ENCODE measurements at regions of chrX and their contacts with region 1.

Region 1: DNA sequence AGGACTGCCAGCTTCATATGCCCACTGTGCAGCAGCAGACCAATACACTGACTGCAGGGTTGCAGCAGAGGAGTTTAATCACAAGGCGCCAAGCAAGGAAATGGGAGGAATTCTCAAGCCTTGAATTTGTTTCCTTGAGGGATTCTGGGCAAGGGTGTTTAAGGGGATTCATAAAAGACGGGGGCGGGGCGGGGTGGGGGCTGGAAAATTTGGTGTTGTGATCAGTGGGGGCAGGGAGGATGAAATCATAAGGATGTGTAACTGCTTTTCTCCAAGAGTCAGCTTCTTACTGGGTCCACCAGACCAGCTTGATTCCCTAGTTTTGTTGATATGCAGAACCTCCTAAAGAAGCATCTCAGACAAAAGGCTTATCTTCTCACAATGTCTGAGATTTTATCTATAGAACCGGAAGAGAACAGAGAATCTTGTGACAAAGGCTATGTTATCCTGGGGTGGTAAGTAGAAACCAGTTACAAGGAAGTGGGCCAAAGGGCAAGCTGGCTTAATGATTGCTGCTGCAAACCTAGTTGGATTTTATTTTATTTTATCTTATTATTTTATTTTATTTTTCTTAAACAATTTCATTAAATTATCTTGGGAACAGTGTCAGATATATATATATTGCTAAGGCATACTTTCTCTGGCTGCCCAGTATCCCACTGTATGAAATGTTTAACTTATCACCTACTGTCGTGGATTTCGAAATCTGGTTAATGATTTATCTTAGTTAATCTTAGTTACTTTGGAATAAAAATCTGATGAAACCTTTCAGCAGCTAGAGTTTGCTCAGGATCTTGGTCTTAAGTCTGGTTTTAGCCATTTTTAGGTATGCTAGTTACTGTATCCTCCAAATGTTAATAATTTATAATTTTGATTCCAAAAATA is 276.4 kb downstream of the RPA4 start:
- DNase-seq: peak; percentile 18
- H3K4me3 ChIP-seq: no peak overlapping the region
- H3K27ac ChIP-seq: peak overlapping the region in 3 of 4 donors; percentile 40 to 45 (median 43)
- H3K4me1 ChIP-seq: peaks cover 0 to 3% (median 0%) of the 10 kb centered on the region in 4 donors
- H3K27me3 ChIP-seq: no peaks in the 10 kb centered on the region
- CTCF ChIP-seq: no peak
- EP300 ChIP-seq: no peak
- POLR2A ChIP-seq: no peak

Region 2: DNA sequence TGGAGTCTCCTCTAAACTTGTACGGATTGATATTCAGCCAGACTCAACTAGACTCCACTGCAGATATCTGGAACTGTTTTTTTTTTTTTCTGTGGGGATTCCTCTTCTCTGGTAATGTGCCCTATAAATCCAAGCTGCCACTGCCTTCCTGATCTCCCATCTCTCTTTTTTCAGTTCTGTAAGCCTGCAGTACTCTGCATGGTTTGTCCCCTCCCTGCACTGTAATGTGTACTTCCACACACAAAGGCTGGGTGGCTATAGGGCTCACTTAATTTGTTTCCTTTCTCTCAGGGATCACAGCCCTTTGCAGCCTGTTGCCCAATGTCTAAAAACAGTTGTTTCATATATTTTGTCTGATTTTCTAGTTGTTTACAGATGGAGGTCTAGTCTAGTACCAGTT is 361.2 kb before region 1 on chrX:
- in situ Hi-C with region 1: no loop called
- intact Hi-C with region 1: loop called (anchors 5 kb)
- DNase-seq: no peak
- H3K4me3 ChIP-seq: no peak overlapping the region
- H3K27ac ChIP-seq: no peak overlapping the region
- H3K4me1 ChIP-seq: no peaks in the 10 kb centered on the region
- H3K27me3 ChIP-seq: no peaks in the 10 kb centered on the region
- CTCF ChIP-seq: no peak
- EP300 ChIP-seq: no peak
- POLR2A ChIP-seq: no peak

Region 3: GRCh38 chrX:96918864-96919263 is 241.3 kb before region 1 on chrX:
- in situ Hi-C with region 1: no loop called
- intact Hi-C with region 1: no loop called
- DNase-seq: no peak
- H3K4me3 ChIP-seq: no peak overlapping the region
- H3K27ac ChIP-seq: no peak overlapping the region
- H3K4me1 ChIP-seq: no peaks in the 10 kb centered on the region
- H3K27me3 ChIP-seq: no peaks in the 10 kb centered on the region
- CTCF ChIP-seq: no peak
- EP300 ChIP-seq: no peak
- POLR2A ChIP-seq: no peak

Region 4: DNA sequence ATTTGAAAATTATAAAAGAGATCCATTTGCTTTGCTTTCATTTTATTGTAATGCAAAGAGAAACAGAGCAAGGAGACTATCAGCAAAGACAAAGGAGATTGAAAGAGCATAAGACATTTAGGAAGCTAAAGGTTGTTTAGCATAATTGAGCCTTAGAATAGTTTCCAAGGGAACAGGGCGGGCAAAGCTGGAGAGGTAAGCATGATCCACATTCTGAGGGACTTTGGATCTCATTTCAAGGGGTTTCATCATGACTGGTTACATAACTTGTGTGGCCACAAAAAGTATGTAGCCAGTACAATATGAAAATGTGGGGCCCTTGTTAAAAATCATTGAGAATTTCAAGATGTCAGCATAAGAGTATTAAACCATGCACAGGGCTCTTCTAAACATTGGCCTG is 130.0 kb after region 1 on chrX:
- in situ Hi-C with region 1: no loop called
- intact Hi-C with region 1: no loop called
- DNase-seq: no peak
- H3K4me3 ChIP-seq: no peak overlapping the region
- H3K27ac ChIP-seq: no peak overlapping the region
- H3K4me1 ChIP-seq: no peaks in the 10 kb centered on the region
- H3K27me3 ChIP-seq: no peaks in the 10 kb centered on the region
- CTCF ChIP-seq: no peak
- EP300 ChIP-seq: no peak
- POLR2A ChIP-seq: no peak

Measured in transverse colon (tissue), 4 donors.